Activated CD4-positive, alpha-beta T cell treated with anti-CD3 and anti-CD28 coated beads, Interleukin-2, amount 10 ng/mL, durations not matched to agents 24 days and 14 days (primary cell): ENCODE measurements at regions of chr18 and their contacts with region 1.

Region 1: GRCh38 chr18:57621246-57621604 is 411 bp downstream of the NARS1 start:
- DNase-seq: no peak
- H3K4me3 Mint-ChIP-seq: peak overlapping the region; percentile 92
- H3K27ac Mint-ChIP-seq: peak overlapping the region; percentile 94
- H3K4me1 Mint-ChIP-seq: peaks cover 23% of the 10 kb centered on the region
- H3K27me3 Mint-ChIP-seq: no peaks in the 10 kb centered on the region

Region 2: GRCh38 chr18:56638271-56639093 is 982.7 kb before region 1 on chr18 and contains the start of gene TXNL1:
- intact Hi-C with region 1: loop called (anchors 5 kb)
- DNase-seq: peak; percentile 100
- H3K4me3 Mint-ChIP-seq: peak within 1 kb of the TSS; percentile 98
- H3K27ac Mint-ChIP-seq: peak within 1 kb of the TSS; percentile 96
- H3K4me1 Mint-ChIP-seq: peaks cover 36% of the 10 kb centered on the region
- H3K27me3 Mint-ChIP-seq: no peaks in the 10 kb centered on the region
- total RNA-seq, gene TXNL1: 102 and 104 TPM in 2 replicates

Region 3: GRCh38 chr18:57586251-57587049 is 34.8 kb before region 1 on chr18 and contains the start of gene FECH:
- intact Hi-C with region 1: loop called (anchors 1 kb)
- DNase-seq: peak; percentile 94
- H3K4me3 Mint-ChIP-seq: peak within 1 kb of the TSS; percentile 85
- H3K27ac Mint-ChIP-seq: peak within 1 kb of the TSS; percentile 80
- H3K4me1 Mint-ChIP-seq: peaks cover 17% of the 10 kb centered on the region
- H3K27me3 Mint-ChIP-seq: no peaks in the 10 kb centered on the region
- total RNA-seq, gene FECH: 22.4 and 25.1 TPM in 2 replicates

Region 4: GRCh38 chr18:57833443-57834101 is 212.3 kb after region 1 on chr18:
- intact Hi-C with region 1: loop called (anchors 2 kb)
- DNase-seq: peak; percentile 74
- H3K4me3 Mint-ChIP-seq: peak overlapping the region; percentile 70
- H3K27ac Mint-ChIP-seq: peak overlapping the region; percentile 46
- H3K4me1 Mint-ChIP-seq: peaks cover 31% of the 10 kb centered on the region
- H3K27me3 Mint-ChIP-seq: peaks cover 15% of the 10 kb centered on the region